ENCODE measurements at regions of chr7 and their contacts with region 1.

Region 1: GRCh38 chr7:133804127-133804526 is 323.0 kb upstream of the LRGUK start:
- DNase-seq: no peak
- H3K4me3 ChIP-seq: no peak overlapping the region
- H3K27ac ChIP-seq: peak overlapping the region in 1 of 2 experiments; percentile 100; a peak in 2 of 4 replicates
- H3K4me1 ChIP-seq: peaks cover 0 to 45% of the 10 kb centered on the region in 2 experiments; a peak in 2 of 4 replicates
- H3K27me3 ChIP-seq: no peaks in the 10 kb centered on the region
- CTCF ChIP-seq: no peak
- EP300 ChIP-seq: no peak
- RAD21 ChIP-seq: no peak

Region 2: GRCh38 chr7:133513598-133513997 is 290.5 kb before region 1 on chr7:
- CTCF ChIA-PET with region 1: no interaction called
- POLR2A ChIA-PET with region 1: no interaction called
- DNase-seq: no peak
- H3K4me3 ChIP-seq: no peak overlapping the region
- H3K27ac ChIP-seq: no peak overlapping the region
- H3K4me1 ChIP-seq: no peaks in the 10 kb centered on the region
- H3K27me3 ChIP-seq: no peaks in the 10 kb centered on the region
- CTCF ChIP-seq: no peak
- EP300 ChIP-seq: no peak
- RAD21 ChIP-seq: no peak

Region 3: DNA sequence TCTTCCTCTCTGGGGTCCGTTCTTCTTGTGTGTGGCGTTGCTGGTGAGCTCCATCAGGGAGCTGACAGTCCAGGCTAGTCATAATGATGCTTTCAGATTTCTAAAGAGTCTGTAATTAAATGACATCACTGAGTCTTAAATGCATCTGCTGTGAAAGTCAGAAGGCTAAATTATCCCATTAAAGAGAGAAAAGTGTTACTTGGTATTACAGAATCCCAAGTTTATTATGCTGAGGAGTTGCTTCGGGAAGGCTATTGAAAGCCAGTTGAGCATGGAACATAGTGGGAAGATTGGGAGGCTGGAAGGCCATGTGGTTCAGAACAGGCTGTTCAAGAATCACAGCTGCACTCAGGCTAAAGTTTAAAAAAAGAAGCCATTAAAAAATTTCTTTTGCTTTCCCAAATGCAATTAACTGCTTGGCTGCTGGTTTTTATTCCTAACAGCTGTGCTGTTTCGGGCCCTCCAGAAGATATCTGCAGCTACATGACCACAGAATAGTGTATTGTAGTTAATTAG is 19.6 kb before region 1 on chr7:
- CTCF ChIA-PET with region 1: interaction called, 51 read pairs
- POLR2A ChIA-PET with region 1: interaction called, 16 read pairs
- DNase-seq: peak; percentile 66
- H3K4me3 ChIP-seq: no peak overlapping the region
- H3K27ac ChIP-seq: peak overlapping the region in 1 of 2 experiments; percentile 100; a peak in 3 of 4 replicates
- H3K4me1 ChIP-seq: peaks cover 0 to 57% of the 10 kb centered on the region in 2 experiments; a peak in 2 of 4 replicates
- H3K27me3 ChIP-seq: no peaks in the 10 kb centered on the region
- CTCF ChIP-seq: no peak
- EP300 ChIP-seq: peak in 1 of 2 experiments; percentile 99; a peak in 2 of 4 replicates
- RAD21 ChIP-seq: peak; percentile 54

Region 4: DNA sequence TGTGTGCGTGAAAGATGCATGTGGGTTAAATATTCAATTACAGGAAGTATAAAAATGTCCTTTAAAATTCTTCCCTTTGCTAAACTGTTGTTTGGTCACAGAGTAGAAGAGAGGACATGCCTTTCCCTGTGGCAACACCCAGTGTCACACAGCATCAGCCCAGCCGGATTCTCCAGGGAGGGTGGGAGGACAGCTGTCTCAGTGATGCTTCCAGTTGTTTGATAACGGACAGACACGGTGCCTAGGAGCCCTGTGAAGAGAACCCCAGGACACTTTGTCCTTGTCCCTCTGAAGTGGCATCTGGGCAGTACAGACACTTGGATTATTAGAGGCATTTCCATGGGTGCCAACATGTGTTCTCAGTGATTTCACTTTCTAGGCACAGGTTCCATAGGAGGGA is 16.5 kb after region 1 on chr7:
- CTCF ChIA-PET with region 1: interaction called, 15 read pairs
- POLR2A ChIA-PET with region 1: interaction called, 9 read pairs
- DNase-seq: peak; percentile 41
- H3K4me3 ChIP-seq: no peak overlapping the region
- H3K27ac ChIP-seq: peak overlapping the region in 1 of 2 experiments; percentile 93; a peak in 2 of 4 replicates
- H3K4me1 ChIP-seq: peaks cover 0 to 38% of the 10 kb centered on the region in 2 experiments; a peak in 3 of 4 replicates
- H3K27me3 ChIP-seq: no peaks in the 10 kb centered on the region
- CTCF ChIP-seq: no peak
- EP300 ChIP-seq: no peak; a peak in 1 of 4 replicates
- RAD21 ChIP-seq: peak; percentile 27; the same call in 1 of the 2 replicates

Region 5: GRCh38 chr7:133837224-133837623 is 33.1 kb after region 1 on chr7:
- CTCF ChIA-PET with region 1: interaction called, 47 read pairs
- POLR2A ChIA-PET with region 1: interaction called, 26 read pairs
- DNase-seq: peak; percentile 57
- H3K4me3 ChIP-seq: no peak overlapping the region
- H3K27ac ChIP-seq: peak overlapping the region; percentile 12 to 100; a peak in 3 of 4 replicates
- H3K4me1 ChIP-seq: peaks cover 0 to 50% of the 10 kb centered on the region in 2 experiments; a peak in 2 of 4 replicates
- H3K27me3 ChIP-seq: no peaks in the 10 kb centered on the region
- CTCF ChIP-seq: no peak
- EP300 ChIP-seq: peak in 1 of 2 experiments; percentile 94; a peak in 2 of 4 replicates
- RAD21 ChIP-seq: peak; percentile 33; the same call in 1 of the 2 replicates

Region 6: GRCh38 chr7:134254311-134254710 is 450.2 kb after region 1 on chr7:
- CTCF ChIA-PET with region 1: no interaction called
- POLR2A ChIA-PET with region 1: no interaction called
- DNase-seq: no peak
- H3K4me3 ChIP-seq: no peak overlapping the region
- H3K27ac ChIP-seq: no peak overlapping the region
- H3K4me1 ChIP-seq: no peaks in the 10 kb centered on the region
- H3K27me3 ChIP-seq: no peaks in the 10 kb centered on the region
- CTCF ChIP-seq: peak; percentile 29; the same call in 1 of the 2 replicates
- EP300 ChIP-seq: no peak
- RAD21 ChIP-seq: peak; percentile 60

Measured in SK-N-SH (cell line).